Left lung (tissue), 14 donors: ENCODE measurements at regions of chr10 and their contacts with region 1.

Region 1: DNA sequence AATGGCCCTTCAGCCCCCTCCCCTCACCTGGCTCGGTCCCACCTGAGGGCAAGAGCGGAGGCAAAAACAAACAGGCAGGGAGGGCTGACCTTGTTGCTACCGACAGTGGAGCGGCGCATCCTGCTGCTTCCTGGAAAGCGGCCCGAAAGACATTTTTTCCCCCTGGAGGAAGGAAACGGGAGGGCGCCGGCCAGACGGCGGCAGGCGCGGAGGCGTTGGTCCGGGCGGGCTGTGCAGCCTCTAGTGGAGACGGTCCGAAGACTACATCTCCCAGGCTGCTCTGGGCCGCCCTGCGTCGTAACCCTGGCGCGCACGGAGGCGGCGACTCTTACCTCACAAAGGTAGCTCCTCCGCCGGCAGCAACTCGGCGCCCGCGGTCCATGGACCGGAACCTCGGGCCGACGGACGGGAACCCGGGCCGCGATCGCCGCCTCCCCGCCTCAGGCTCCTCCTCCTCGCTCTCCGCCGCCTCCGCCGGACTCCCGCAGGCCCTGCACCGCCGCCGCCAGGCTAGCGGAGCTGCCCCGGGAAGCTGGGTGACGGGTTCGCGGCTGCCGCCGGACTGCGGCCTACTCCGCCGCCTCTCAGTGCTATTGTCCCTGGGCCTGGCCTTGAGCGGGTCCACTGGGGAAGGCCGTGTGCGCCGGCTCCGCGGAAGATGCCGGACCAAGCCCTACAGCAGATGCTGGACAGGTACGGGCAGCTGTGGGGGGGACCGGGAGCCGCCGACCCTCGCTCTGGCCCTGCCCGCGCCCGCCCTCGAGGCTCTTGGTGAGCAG is at the starts of genes CPEB3 and MARCHF5:
- DNase-seq: peak; percentile 92 to 100 (median 98)
- ATAC-seq: peak; percentile 99
- H3K4me3 ChIP-seq: peak within 1 kb of the TSS; percentile 56 to 91
- H3K27ac ChIP-seq: peak within 1 kb of the TSS; percentile 90 to 96
- H3K4me1 ChIP-seq: peaks cover 7 to 15% of the 10 kb centered on the region in 2 donors
- H3K27me3 ChIP-seq: no peaks in the 10 kb centered on the region
- CTCF ChIP-seq: peak; percentile 50 to 88
- polyA plus RNA-seq, gene CPEB3: 2.9 to 3.9 (median 3.4) TPM
- polyA plus RNA-seq, gene MARCHF5: 65.7 to 83.6 (median 70.4) TPM

Region 2: DNA sequence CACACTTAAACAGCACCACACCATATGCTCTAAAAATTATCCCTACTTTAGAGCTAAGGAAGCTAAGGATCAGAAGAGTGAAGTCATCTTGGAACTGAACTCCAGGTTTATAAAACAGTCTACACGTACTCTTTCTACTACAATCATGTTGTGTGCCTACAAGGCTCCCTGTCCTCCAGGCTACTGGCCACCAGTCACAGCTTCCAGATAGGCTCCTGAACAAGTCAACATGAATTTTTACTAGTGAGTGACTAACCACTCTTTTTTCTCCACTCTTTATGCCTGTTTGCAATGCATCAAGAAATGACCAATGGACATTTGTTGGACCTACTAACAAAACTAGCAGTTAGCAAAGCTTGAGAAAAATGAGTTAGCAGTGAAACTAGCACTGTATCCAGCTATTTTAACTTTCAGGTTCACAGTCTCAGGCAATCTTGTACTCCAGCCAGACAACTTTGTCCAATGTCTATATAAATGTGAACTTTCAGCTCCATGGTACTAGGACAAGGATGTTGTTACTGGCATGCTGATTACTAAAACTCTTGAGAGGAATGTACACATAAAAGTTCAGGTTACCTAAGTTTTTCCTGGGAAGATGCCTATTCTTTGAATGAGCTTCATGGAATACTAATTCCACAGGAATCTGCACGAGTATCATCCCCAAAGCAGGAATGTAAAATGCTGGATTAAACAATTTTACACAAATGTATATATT is 187.5 kb before region 1 on chr10:
- intact Hi-C with region 1: loop called in 1 of 2 experiments (anchors 10 kb)
- DNase-seq: no peak
- ATAC-seq: peak; percentile 36
- H3K4me3 ChIP-seq: no peak overlapping the region
- H3K27ac ChIP-seq: no peak overlapping the region
- H3K4me1 ChIP-seq: peaks cover 6 to 22% of the 10 kb centered on the region in 2 donors
- H3K27me3 ChIP-seq: no peaks in the 10 kb centered on the region
- CTCF ChIP-seq: no peak